Activated T-helper 1 cell treated with anti-CD3 and anti-CD28 coated beads, Interleukin-12 subunit alpha, Interleukin-12 subunit beta, Interleukin-2, Interleukin-4 antibody, amounts not matched to agents 30 ng/mL and 10 ng/mL and 1 ng/mL, durations not matched to agents 14 hours and 24 hours and 36 hours (primary cell): ENCODE measurements at regions of chr19 and their contacts with region 1.

Region 1: GRCh38 chr19:39846176-39846677 is at the start of gene FBL:
- DNase-seq: peak; percentile 97
- H3K4me3 Mint-ChIP-seq: peak within 1 kb of the TSS; percentile 94
- H3K27ac Mint-ChIP-seq: peak within 1 kb of the TSS; percentile 95
- H3K4me1 Mint-ChIP-seq: peaks cover 46% of the 10 kb centered on the region
- H3K27me3 Mint-ChIP-seq: peaks cover 3% of the 10 kb centered on the region
- total RNA-seq, gene FBL: 526 and 528 TPM in 2 replicates

Region 2: DNA sequence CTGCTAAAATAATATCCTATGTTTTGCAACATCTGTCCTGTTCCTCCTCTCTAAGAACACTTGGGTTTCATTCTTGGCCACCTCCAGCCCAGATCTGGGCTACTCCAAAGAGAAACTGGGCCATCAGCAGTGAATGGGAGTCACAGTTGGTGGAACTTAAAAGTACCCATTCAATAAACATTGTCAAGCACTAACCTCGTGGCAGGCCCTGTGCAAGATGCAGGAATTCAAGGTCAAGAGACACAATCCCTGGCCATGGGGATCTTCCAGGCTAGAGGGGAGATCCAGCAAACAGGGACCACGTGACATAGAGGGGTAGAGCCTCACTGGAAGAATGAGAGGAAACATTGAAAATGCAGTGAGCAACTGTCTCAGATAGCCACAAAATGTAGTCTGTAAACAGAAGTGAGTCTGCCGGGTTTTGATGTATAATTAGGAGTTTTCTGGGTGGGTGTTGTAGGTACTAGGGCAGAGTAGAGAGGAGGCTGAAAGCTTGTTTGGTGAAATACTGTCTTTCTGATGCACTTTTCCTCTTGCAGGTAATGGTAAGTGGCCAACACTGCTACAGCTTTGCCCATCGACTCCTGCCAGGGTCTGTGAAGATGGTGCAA is 291.4 kb before region 1 on chr19:
- intact Hi-C with region 1: loop called (anchors 5 kb)
- DNase-seq: no peak
- H3K4me3 Mint-ChIP-seq: no peak overlapping the region
- H3K27ac Mint-ChIP-seq: no peak overlapping the region
- H3K4me1 Mint-ChIP-seq: peaks cover 37% of the 10 kb centered on the region
- H3K27me3 Mint-ChIP-seq: no peaks in the 10 kb centered on the region

Region 3: GRCh38 chr19:39792999-39793546 is 53.2 kb before region 1 on chr19:
- intact Hi-C with region 1: loop called (anchors 1 kb)
- DNase-seq: peak; percentile 61
- H3K4me3 Mint-ChIP-seq: peak overlapping the region; percentile 77
- H3K27ac Mint-ChIP-seq: no peak overlapping the region
- H3K4me1 Mint-ChIP-seq: peaks cover 5% of the 10 kb centered on the region
- H3K27me3 Mint-ChIP-seq: peaks cover 3% of the 10 kb centered on the region

Region 4: DNA sequence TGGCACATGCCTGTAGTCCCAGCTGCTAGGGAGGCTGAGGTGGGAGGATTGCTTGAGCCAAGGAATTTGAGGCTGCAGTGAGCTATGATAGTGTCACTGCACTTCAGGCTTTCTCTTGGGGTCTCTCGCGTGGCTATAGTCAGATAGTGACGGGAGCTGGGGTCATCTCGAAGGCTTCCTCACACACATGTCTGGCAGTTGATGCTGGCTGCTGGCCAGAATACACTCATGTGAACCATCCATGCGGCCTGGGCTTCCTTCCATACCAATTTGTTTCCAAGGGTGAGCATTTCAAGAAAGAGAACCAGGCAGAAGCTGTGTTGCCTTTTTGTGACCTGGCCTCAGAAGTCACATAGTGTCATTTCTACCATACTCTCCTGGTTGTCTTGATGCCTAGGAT is 41.1 kb before region 1 on chr19:
- intact Hi-C with region 1: no loop called
- DNase-seq: no peak
- H3K4me3 Mint-ChIP-seq: no peak overlapping the region
- H3K27ac Mint-ChIP-seq: no peak overlapping the region
- H3K4me1 Mint-ChIP-seq: no peaks in the 10 kb centered on the region
- H3K27me3 Mint-ChIP-seq: peaks cover 6% of the 10 kb centered on the region

Region 5: GRCh38 chr19:39833464-39834286 is 12.6 kb before region 1 on chr19 and contains the start of gene DYRK1B:
- intact Hi-C with region 1: loop called (anchors 1 kb)
- DNase-seq: peak; percentile 95
- H3K4me3 Mint-ChIP-seq: peak within 1 kb of the TSS; percentile 69
- H3K27ac Mint-ChIP-seq: peak within 1 kb of the TSS; percentile 78
- H3K4me1 Mint-ChIP-seq: peaks cover 35% of the 10 kb centered on the region
- H3K27me3 Mint-ChIP-seq: no peaks in the 10 kb centered on the region
- total RNA-seq, gene DYRK1B: 4.2 and 5.5 TPM in 2 replicates

Region 6: GRCh38 chr19:40055832-40056504 is 209.7 kb after region 1 on chr19 and contains the start of gene ZNF780B:
- intact Hi-C with region 1: loop called (anchors 1 kb)
- DNase-seq: peak; percentile 69
- H3K4me3 Mint-ChIP-seq: peak within 1 kb of the TSS; percentile 97
- H3K27ac Mint-ChIP-seq: peak within 1 kb of the TSS; percentile 92
- H3K4me1 Mint-ChIP-seq: peaks cover 42% of the 10 kb centered on the region
- H3K27me3 Mint-ChIP-seq: peaks cover 12% of the 10 kb centered on the region
- total RNA-seq, gene ZNF780B: 25.8 and 29.0 TPM in 2 replicates